Naive thymus-derived CD4-positive, alpha-beta T cell (primary cell): ENCODE measurements at regions of chr7 and their contacts with region 1.

Region 1: DNA sequence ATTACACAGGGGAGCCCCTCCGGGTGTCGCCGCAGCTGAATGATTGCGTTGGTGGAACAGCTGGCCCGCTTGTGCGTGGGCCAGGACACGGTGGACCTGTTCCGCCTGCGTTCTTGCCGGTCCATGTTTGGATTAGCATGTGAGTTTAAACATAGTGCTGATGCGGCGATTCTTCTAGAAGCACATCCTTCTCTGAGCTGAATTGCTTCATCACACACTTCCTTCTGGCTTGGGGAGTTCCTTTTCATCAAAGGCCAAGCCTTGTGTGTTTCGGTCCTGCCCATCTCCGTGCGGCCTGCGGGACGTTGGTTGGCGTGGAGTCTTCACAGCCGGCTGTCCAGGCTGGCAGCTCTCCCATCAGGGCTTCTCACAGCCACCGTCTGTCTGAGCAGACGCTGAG is 45.5 kb upstream of the SLC29A4 start:
- DNase-seq: no peak
- ATAC-seq: peak; percentile 64
- H3K4me3 ChIP-seq: no peak overlapping the region
- H3K4me3 Mint-ChIP-seq: no peak overlapping the region
- H3K27ac ChIP-seq: no peak overlapping the region
- H3K27ac Mint-ChIP-seq: peak overlapping the region in 1 of 9 donors; percentile 14
- H3K4me1 ChIP-seq: peaks cover 0 to 4% of the 10 kb centered on the region in 2 donors
- H3K4me1 Mint-ChIP-seq: peaks cover 14 to 31% (median 25%) of the 10 kb centered on the region in 7 donors
- H3K27me3 ChIP-seq: no peaks in the 10 kb centered on the region
- H3K27me3 Mint-ChIP-seq: peaks cover 15 to 24% (median 17%) of the 10 kb centered on the region in 5 donors

Region 2: DNA sequence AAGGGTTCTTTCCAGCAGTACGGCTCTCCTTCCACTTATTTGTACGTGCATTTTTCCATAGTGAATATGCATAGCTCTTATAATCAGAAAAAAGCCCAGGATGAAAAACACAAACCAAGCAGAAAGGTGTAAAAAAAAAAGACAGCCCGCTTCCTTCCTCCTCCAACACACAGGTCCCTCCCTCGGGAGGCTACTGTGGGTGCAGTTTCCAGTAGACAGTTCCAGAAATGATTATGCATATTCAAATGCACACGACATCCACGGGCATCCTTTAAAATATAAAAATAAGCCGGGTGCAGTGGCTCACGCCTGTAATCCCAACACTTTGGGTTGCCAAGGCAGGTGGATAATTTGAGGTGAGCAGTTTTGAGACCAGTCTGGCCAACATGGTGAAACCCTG is 126.4 kb after region 1 on chr7:
- CTCF ChIA-PET with region 1: interaction called, 4 read pairs
- POLR2A ChIA-PET with region 1: no interaction called
- intact Hi-C with region 1: loop called in 1 of 2 experiments (anchors 1 kb)
- DNase-seq: no peak
- ATAC-seq: no peak
- H3K4me3 ChIP-seq: no peak overlapping the region
- H3K4me3 Mint-ChIP-seq: peak overlapping the region in 1 of 10 donors; percentile 8
- H3K27ac ChIP-seq: no peak overlapping the region
- H3K27ac Mint-ChIP-seq: peak overlapping the region in 2 of 9 donors; percentile 51 to 53
- H3K4me1 ChIP-seq: peaks cover 0 to 5% of the 10 kb centered on the region in 2 donors
- H3K4me1 Mint-ChIP-seq: peaks cover 5 to 20% (median 11%) of the 10 kb centered on the region in 7 donors
- H3K27me3 ChIP-seq: no peaks in the 10 kb centered on the region
- H3K27me3 Mint-ChIP-seq: no peaks in the 10 kb centered on the region

Region 3: DNA sequence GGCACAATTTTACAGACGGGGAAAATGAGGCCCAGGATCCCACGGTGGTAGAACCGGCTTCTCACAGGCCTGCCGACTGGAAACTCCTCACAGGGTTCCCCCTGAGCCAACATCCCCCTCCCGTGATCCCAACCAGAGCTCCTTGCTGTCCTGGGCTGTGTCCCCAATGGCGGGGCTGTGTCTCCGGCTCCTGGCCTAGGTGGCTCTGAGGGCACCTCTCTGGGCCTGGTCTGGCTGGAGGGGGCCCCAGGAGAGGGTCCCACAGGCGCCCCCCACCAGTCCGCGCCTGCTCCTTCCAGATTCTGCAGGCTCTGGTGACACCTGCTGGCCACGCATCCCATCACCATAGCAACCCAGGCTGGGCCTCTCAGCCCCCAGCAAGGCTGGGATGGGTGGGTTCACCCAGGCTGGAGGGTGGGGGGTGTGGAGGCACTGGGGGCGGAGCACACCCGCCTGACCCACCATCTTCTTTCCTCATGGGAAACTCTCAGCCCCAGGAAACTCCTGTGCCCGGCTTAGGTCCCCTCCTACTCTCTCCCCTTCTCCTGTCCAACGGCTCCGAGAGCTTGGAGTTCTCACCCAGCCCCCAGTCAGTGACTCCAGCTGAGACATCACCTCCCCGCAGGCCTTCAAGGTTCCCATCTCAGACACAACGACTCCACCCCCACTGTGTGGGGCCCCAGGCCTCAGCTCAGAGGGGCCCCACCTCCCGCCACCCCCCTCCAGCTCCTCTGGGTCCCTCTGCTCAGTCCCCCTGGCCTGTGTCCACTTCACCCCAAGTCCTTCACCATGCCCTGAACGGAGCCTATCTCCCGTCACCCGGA is 213.5 kb after region 1 on chr7:
- CTCF ChIA-PET with region 1: interaction called, 14 read pairs
- POLR2A ChIA-PET with region 1: interaction called, 3 read pairs
- intact Hi-C with region 1: loop called in 1 of 2 experiments (anchors 1 kb)
- DNase-seq: peak in 6 of 9 donors; percentile 22 to 45 (median 40)
- ATAC-seq: peak; percentile 80
- H3K4me3 ChIP-seq: no peak overlapping the region
- H3K4me3 Mint-ChIP-seq: no peak overlapping the region
- H3K27ac ChIP-seq: no peak overlapping the region
- H3K27ac Mint-ChIP-seq: no peak overlapping the region
- H3K4me1 ChIP-seq: no peaks in the 10 kb centered on the region
- H3K4me1 Mint-ChIP-seq: peaks cover 0 to 7% (median 0%) of the 10 kb centered on the region in 7 donors
- H3K27me3 ChIP-seq: no peaks in the 10 kb centered on the region
- H3K27me3 Mint-ChIP-seq: peaks cover 0 to 7% (median 5%) of the 10 kb centered on the region in 5 donors